Calu3 (cell line): ENCODE measurements at regions of chr3 and their contacts with region 1.

Region 1: DNA sequence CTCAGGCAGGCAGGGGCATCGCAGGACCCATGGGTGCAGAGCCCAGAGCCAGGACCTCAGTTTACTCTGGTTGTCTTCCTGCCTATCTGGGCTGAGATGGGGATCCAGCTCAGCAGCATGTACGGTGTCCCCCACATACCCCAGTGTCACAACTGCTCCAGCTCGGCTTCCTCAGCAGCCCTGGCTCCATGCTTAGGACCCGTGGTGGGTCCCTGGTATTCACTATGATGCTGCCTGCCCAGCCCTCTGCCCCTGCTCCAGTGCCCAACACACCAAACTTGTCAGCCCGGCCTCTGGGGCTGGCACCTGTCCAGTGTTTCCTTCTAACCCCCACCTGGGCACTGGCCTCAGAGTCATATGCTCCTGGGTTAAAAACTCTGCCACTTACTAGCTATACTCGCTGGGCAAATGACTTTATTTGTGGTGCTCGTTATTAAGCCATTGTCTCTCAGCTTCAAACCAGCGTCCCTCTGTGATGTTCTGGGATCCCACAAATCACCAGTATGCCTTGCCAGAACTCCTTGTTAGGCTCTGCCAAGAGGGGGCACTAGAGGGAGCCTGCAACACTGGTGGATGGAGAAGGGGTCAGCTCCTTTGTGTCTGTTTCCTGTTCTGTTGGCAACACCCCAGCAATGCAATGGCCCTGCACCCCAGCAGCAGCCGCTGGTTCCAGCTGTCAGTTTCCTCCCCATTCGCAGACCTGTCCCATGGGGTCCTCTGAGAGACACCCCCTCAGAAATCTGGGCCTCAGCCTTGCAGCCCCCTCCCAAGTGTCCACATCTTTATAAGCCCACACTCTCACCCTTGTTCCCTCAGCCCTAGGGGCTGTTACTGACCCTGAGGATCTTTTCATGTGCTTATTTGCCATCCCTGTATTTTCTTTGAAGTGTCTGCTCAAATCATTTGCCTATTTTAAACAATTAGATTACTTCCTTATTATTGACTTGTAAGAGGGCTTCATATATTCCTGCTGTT is 24.1 kb upstream of the MRPS22 start:
- DNase-seq: peak; percentile 65
- H3K4me3 Mint-ChIP-seq: no peak overlapping the region
- H3K27ac Mint-ChIP-seq: no peak overlapping the region
- H3K4me1 Mint-ChIP-seq: peaks cover 39% of the 10 kb centered on the region
- H3K27me3 Mint-ChIP-seq: no peaks in the 10 kb centered on the region
- CTCF ChIP-seq: no peak

Region 2: GRCh38 chr3:139302084-139302800 is 17.5 kb before region 1 on chr3:
- CTCF ChIA-PET with region 1: interaction called, 15 read pairs
- intact Hi-C with region 1: no loop called
- DNase-seq: peak; percentile 89
- H3K4me3 Mint-ChIP-seq: peak overlapping the region; percentile 4
- H3K27ac Mint-ChIP-seq: peak overlapping the region; percentile 71
- H3K4me1 Mint-ChIP-seq: peaks cover 69% of the 10 kb centered on the region
- H3K27me3 Mint-ChIP-seq: no peaks in the 10 kb centered on the region
- CTCF ChIP-seq: no peak